Activated naive CD4-positive, alpha-beta T cell treated with anti-CD3 and anti-CD28 coated beads for 36 hours (primary cell): ENCODE measurements at regions of chr4 and their contacts with region 1.

Region 1: GRCh38 chr4:82123934-82124333 is 249.9 kb downstream of the HNRNPD start:
- DNase-seq: peak; percentile 28
- H3K4me3 Mint-ChIP-seq: no peak overlapping the region
- H3K27ac Mint-ChIP-seq: no peak overlapping the region
- H3K4me1 Mint-ChIP-seq: peaks cover 4% of the 10 kb centered on the region
- H3K27me3 Mint-ChIP-seq: no peaks in the 10 kb centered on the region

Region 2: DNA sequence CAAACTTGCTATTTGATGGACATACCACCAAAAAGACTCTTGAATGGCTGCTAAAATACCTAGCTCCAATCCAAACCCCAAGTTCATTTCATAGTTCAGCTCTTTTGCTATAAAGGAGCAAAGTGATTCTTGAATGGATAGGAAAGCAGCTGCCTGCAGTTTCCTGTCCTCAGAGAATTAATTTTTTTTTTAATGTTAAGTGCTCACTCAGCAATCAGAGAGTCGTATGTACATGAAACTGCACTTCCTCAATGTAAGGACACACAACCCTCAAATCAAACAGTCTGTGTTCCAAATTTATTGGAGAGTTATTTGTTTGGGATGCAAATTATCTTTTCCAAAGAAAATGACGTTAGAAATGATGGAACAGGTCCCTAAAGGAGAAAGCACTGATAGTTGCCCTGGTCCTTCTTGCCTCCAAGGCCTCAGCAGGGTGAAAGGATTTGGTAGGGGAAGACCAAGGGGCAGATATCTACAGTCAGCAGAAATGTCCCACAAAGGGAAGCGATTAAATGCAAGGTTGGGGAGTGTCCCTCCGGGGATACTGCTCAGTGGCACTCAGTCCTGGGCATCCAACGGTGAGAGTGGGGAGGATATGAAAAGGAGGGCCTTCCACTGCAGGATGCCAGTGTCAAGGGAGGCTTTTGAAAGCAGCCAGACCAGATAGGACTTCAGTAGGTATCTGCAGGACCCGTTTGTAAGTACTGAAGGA is 585.1 kb before region 1 on chr4:
- CTCF ChIA-PET with region 1: no interaction called
- intact Hi-C with region 1: no loop called
- DNase-seq: no peak
- H3K4me3 Mint-ChIP-seq: no peak overlapping the region
- H3K27ac Mint-ChIP-seq: no peak overlapping the region
- H3K4me1 Mint-ChIP-seq: no peaks in the 10 kb centered on the region
- H3K27me3 Mint-ChIP-seq: no peaks in the 10 kb centered on the region

Region 3: DNA sequence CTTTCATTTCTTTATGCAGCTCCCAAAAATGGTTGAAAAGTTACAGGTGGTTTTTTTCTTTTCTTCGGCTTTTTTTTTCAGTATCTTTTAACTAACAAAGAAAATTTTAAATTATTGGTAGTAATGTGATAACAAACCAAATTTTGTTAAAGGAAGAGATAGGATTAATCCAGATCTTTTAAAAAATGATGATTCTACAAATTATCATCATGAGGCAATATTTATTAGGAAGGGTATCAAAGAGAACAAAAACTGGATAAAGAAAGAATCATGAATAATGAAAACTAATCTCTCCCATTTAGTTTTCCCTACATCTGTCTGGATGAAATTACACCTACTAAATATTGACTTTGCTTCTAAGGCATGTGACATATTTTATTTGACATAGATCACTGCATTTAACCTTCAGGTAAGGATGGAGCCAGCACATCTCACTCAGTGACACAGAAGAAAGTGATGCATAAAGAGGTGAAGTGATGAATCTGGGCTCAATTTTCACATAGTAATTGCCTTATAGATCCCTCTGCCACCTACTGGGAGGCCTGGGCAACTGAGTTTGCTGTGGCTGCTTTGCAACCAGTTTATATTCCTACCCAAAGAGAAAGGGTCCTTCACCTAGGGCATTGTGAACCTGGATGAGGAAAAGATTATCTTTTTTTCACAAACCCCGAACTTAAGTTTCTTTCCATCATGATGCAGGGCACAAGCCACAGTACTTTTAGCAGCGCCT is 94.2 kb after region 1 on chr4:
- CTCF ChIA-PET with region 1: no interaction called
- intact Hi-C with region 1: loop called (anchors 5 kb)
- DNase-seq: peak; percentile 21
- H3K4me3 Mint-ChIP-seq: no peak overlapping the region
- H3K27ac Mint-ChIP-seq: no peak overlapping the region
- H3K4me1 Mint-ChIP-seq: peaks cover 13% of the 10 kb centered on the region
- H3K27me3 Mint-ChIP-seq: no peaks in the 10 kb centered on the region